Activated T-helper 1 cell treated with anti-CD3 and anti-CD28 coated beads, Interleukin-12 subunit alpha, Interleukin-12 subunit beta, Interleukin-2, Interleukin-4 antibody, amounts not matched to agents 30 ng/mL and 10 ng/mL and 1 ng/mL, durations not matched to agents 14 hours and 24 hours and 36 hours (primary cell): ENCODE measurements at regions of chr4 and their contacts with region 1.

Region 1: GRCh38 chr4:87235020-87235671 is 14.7 kb upstream of the KLHL8 start:
- DNase-seq: no peak
- H3K4me3 Mint-ChIP-seq: no peak overlapping the region
- H3K27ac Mint-ChIP-seq: no peak overlapping the region
- H3K4me1 Mint-ChIP-seq: peaks cover 7% of the 10 kb centered on the region
- H3K27me3 Mint-ChIP-seq: peaks cover 14% of the 10 kb centered on the region

Region 2: DNA sequence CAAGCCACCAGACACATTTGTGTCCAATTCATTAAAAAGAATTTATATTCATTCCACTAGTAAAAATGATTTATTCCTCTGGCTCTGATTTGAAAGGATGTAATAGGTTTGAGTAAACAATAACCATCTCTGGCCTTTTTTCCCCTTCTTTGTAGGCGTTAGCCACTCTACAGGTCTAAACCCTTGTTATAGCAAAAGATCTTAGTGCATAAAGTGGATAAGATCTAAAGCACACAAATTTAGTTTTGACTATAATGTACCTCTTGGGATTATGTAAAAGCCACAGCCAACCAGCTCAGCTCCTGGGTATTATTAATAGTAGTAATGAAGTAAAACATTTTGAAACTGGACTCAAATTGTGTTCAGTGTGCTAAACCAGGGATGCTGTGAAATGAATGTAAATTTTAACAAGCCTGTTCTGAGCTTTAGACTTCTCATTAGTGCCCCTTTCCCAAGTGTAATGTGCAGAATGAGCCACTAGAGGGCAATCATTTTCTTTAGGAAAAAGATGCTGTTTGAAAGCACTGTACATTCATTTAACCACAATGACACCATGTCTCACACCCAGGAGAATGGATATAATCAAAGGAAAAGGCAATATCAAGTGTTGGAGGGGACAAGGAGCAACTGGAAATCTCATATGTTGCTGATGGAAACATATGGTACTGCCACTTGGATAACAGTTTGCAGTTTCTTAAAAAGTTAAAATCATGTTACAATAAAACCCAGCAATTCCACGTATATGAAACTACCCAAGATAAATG is 84.5 kb before region 1 on chr4:
- intact Hi-C with region 1: loop called (anchors 1 kb)
- DNase-seq: peak; percentile 37
- H3K4me3 Mint-ChIP-seq: no peak overlapping the region
- H3K27ac Mint-ChIP-seq: no peak overlapping the region
- H3K4me1 Mint-ChIP-seq: peaks cover 7% of the 10 kb centered on the region
- H3K27me3 Mint-ChIP-seq: no peaks in the 10 kb centered on the region

Region 3: GRCh38 chr4:87270144-87270543 is 35.0 kb after region 1 on chr4:
- intact Hi-C with region 1: no loop called
- DNase-seq: no peak
- H3K4me3 Mint-ChIP-seq: no peak overlapping the region
- H3K27ac Mint-ChIP-seq: no peak overlapping the region
- H3K4me1 Mint-ChIP-seq: no peaks in the 10 kb centered on the region
- H3K27me3 Mint-ChIP-seq: peaks cover 5% of the 10 kb centered on the region

Region 4: DNA sequence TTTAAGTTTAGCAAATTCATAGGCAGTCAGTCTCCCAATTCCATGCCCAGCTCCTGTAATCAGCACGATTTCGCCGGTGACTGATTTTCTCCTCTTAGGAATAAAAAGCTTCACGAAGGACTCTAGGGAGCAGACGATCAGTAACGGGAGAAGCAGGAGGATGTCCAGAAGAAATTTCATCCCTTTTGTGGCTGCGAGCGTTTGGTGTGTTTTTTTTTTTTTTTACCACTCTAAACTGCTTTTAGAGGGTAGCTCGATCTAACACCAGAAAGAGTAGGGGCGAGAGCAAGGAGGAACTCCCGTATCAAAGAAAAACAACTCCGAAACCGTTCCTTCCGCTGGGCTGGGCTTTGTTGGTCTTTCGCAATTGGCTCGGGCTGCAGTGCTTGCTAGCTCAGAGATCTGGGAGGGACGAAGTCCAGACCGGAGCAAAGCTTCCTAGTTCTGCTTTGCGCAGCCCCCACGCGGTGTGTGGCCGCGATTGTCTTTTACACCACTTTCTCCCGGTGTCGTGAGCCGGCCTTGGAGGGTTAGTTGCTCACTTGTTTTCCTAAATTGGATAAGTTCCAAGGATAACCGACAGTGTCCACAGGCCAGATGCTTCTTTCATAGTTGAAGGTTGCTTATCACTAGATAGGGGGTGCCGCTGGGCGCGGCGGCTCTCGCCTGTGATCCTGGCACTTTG is 155.9 kb after region 1 on chr4 and contains the start of gene HSD17B11:
- intact Hi-C with region 1: loop called (anchors 5 kb)
- DNase-seq: peak; percentile 74
- H3K4me3 Mint-ChIP-seq: peak within 1 kb of the TSS; percentile 94
- H3K27ac Mint-ChIP-seq: peak within 1 kb of the TSS; percentile 85
- H3K4me1 Mint-ChIP-seq: peaks cover 44% of the 10 kb centered on the region
- H3K27me3 Mint-ChIP-seq: peaks cover 8% of the 10 kb centered on the region
- total RNA-seq, gene HSD17B11: 12.1 and 12.7 TPM in 2 replicates